ENCODE measurements at regions of chr12 and their contacts with region 1.

Region 1: GRCh38 chr12:120292661-120293531 is at the start of gene RNU4-1:
- DNase-seq: peak; percentile 99
- ATAC-seq: peak; percentile 50
- H3K4me3 ChIP-seq: peak within 1 kb of the TSS; percentile 66
- H3K27ac ChIP-seq: peak within 1 kb of the TSS; percentile 91
- H3K4me1 ChIP-seq: peaks cover 14% of the 10 kb centered on the region
- H3K27me3 ChIP-seq: no peaks in the 10 kb centered on the region
- CTCF ChIP-seq: no peak
- total RNA-seq, gene RNU4-1: under 0.01 TPM in 2 replicates

Region 2: GRCh38 chr12:120116792-120117651 is 175.9 kb before region 1 on chr12:
- CTCF ChIA-PET with region 1: no interaction called
- POLR2A ChIA-PET with region 1: interaction called, 19 read pairs
- intact Hi-C with region 1: no loop called
- DNase-seq: peak; percentile 97
- ATAC-seq: peak; percentile 65
- H3K4me3 ChIP-seq: peak overlapping the region; percentile 91
- H3K27ac ChIP-seq: peak overlapping the region; percentile 83
- H3K4me1 ChIP-seq: peaks cover 32% of the 10 kb centered on the region
- H3K27me3 ChIP-seq: no peaks in the 10 kb centered on the region
- CTCF ChIP-seq: no peak

Region 3: GRCh38 chr12:120132863-120133385 is 160.0 kb before region 1 on chr12:
- CTCF ChIA-PET with region 1: no interaction called
- POLR2A ChIA-PET with region 1: no interaction called
- intact Hi-C with region 1: no loop called
- DNase-seq: no peak
- ATAC-seq: no peak
- H3K4me3 ChIP-seq: no peak overlapping the region
- H3K27ac ChIP-seq: no peak overlapping the region
- H3K4me1 ChIP-seq: peaks cover 11% of the 10 kb centered on the region; the same call in 1 of the 2 replicates
- H3K27me3 ChIP-seq: no peaks in the 10 kb centered on the region
- CTCF ChIP-seq: no peak

Region 4: GRCh38 chr12:120228291-120229070 is 64.4 kb before region 1 on chr12:
- CTCF ChIA-PET with region 1: interaction called, 9 read pairs
- POLR2A ChIA-PET with region 1: interaction called, 72 read pairs
- intact Hi-C with region 1: loop called (anchors 1 kb)
- DNase-seq: peak; percentile 89
- ATAC-seq: peak; percentile 5
- H3K4me3 ChIP-seq: peak overlapping the region; percentile 60
- H3K27ac ChIP-seq: peak overlapping the region; percentile 99
- H3K4me1 ChIP-seq: peaks cover 60% of the 10 kb centered on the region
- H3K27me3 ChIP-seq: no peaks in the 10 kb centered on the region
- CTCF ChIP-seq: peak; percentile 96

Region 5: DNA sequence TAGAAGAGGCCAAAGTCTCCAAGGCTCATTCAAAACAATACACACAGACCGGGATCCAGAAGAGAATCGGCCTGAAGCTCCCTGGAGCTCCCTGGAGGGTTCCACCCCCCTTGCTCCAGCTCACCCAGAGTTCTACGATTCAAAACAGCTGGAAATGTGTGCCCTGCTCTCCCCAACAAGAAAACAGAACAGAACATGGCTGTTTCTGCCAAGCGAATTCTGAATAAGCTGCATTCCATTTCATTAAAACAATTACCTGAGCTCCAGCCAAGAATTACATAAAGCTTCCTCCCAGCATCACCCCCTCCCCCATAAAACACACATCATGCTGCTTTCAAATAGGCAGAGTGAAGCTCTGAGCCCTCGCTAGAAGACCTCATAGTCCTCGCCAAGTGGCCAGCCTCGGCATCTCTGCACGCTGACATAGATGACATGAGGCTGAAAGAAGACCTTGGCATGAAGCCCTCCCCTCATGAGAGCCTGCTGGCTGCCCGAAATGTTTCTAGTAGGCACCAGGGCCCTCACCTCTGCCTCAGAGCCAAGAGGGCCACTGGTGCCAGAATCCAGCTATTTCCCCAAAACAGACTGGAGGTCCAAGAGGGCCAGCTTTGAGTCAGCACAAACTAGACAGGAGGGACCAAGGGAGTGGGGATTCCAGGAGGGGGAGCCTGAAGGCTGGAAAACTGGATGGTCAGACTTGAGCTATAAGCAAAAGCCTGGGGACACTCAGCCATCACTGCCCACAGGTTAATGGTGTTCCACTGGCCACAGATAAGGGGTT is 35.7 kb before region 1 on chr12:
- CTCF ChIA-PET with region 1: interaction called, 3 read pairs
- POLR2A ChIA-PET with region 1: interaction called, 42 read pairs
- intact Hi-C with region 1: no loop called
- DNase-seq: peak; percentile 89
- ATAC-seq: peak; percentile 68
- H3K4me3 ChIP-seq: peak overlapping the region; percentile 46
- H3K27ac ChIP-seq: peak overlapping the region; percentile 77
- H3K4me1 ChIP-seq: peaks cover 64% of the 10 kb centered on the region
- H3K27me3 ChIP-seq: no peaks in the 10 kb centered on the region
- CTCF ChIP-seq: 0 out of 2 replicates have a peak, but pooled peaks have one; percentile 28

Region 6: GRCh38 chr12:120276734-120277133 is 16.2 kb before region 1 on chr12:
- CTCF ChIA-PET with region 1: interaction called, 14 read pairs
- POLR2A ChIA-PET with region 1: interaction called, 5 read pairs
- intact Hi-C with region 1: no loop called
- DNase-seq: no peak
- ATAC-seq: no peak
- H3K4me3 ChIP-seq: no peak overlapping the region
- H3K27ac ChIP-seq: no peak overlapping the region
- H3K4me1 ChIP-seq: no peaks in the 10 kb centered on the region
- H3K27me3 ChIP-seq: no peaks in the 10 kb centered on the region
- CTCF ChIP-seq: no peak

Region 7: DNA sequence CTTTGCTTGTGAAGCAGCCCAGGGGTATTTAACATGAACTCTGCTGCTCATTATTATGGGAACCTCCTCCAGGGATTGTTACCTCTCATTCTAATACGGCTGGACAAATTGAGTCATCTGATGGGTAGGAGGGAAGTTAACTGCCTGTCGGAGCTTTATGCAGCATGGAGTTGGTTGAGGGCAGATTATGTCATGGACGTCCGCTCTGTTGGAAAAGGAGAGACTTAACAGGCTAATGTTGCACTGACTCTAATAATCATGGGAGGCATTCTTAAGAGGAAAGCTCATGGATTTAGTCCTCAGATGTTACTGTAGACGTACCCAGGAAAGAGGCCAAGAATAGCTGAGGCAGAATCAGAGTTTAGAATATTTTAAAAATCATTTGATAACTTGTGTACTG is 278.4 kb after region 1 on chr12:
- CTCF ChIA-PET with region 1: no interaction called
- POLR2A ChIA-PET with region 1: no interaction called
- intact Hi-C with region 1: no loop called
- DNase-seq: no peak
- ATAC-seq: no peak; the same call in 1 of the 2 replicates
- H3K4me3 ChIP-seq: no peak overlapping the region
- H3K27ac ChIP-seq: no peak overlapping the region
- H3K4me1 ChIP-seq: no peaks in the 10 kb centered on the region
- H3K27me3 ChIP-seq: no peaks in the 10 kb centered on the region
- CTCF ChIP-seq: no peak

Region 8: DNA sequence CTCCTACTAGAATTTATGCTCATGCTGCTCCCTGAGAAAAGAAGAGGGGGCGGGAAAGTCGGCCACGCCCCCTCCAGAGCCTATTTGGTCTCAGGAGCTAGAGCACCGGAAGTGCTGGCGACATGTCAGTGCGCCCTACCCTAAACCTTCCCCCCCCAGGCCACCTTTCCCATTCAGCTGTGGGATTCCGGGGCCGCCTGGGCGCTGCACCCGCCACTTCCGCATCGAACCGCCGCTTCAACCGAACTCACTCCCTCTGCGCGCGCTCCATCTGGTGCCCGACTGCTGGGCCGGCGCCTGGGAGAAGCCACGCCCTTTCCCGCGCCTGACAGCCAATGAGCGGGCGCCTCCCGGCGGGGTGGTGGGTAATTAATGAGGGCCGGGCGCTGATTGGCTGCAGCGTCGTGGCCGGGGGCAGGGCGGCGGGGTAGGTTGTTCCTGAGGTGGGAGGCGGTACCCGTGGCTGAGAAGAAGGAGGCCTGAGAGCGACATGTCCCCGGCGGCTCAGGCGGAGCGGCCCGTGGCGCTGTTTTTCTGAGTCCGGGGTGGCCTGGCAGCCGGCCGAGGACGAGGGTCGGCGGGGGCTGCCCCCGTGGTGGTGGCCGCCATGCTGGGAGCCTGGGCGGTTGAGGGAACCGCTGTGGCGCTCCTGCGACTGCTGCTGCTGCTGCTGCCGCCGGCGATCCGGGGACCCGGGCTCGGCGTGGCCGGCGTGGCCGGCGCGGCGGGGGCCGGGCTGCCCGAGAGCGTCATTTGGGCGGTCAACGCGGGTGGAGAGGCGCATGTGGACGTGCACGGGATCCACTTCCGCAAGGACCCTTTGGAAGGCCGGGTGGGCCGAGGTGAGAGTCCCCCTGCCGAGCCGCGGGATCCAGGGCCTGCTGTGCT is 394.0 kb after region 1 on chr12 and contains the start of gene MLEC:
- CTCF ChIA-PET with region 1: no interaction called
- POLR2A ChIA-PET with region 1: no interaction called
- intact Hi-C with region 1: loop called (anchors 5 kb)
- DNase-seq: peak; percentile 98
- ATAC-seq: peak; percentile 76
- H3K4me3 ChIP-seq: peak within 1 kb of the TSS; percentile 96
- H3K27ac ChIP-seq: peak within 1 kb of the TSS; percentile 93
- H3K4me1 ChIP-seq: peaks cover 34% of the 10 kb centered on the region
- H3K27me3 ChIP-seq: no peaks in the 10 kb centered on the region
- CTCF ChIP-seq: peak; percentile 18; the same call in 1 of the 2 replicates
- total RNA-seq, gene MLEC: 158 and 166 TPM in 2 replicates

Measured in PC-3 (cell line).